Activated T-helper 2 cell treated with anti-CD3 and anti-CD28 coated beads, Interferon-gamma antibody, Interleukin-2, Interleukin-4, amounts not matched to agents 10 μg/mL and 5 μg/mL and 100 μg/mL, durations not matched to agents 14 hours and 24 hours and 36 hours (primary cell): ENCODE measurements at regions of chr2 and their contacts with region 1.

Region 1: GRCh38 chr2:202588647-202589581 is 45.9 kb upstream of the FAM117B start:
- DNase-seq: peak; percentile 53
- H3K4me3 Mint-ChIP-seq: no peak overlapping the region
- H3K27ac Mint-ChIP-seq: no peak overlapping the region
- H3K4me1 Mint-ChIP-seq: peaks cover 4% of the 10 kb centered on the region
- H3K27me3 Mint-ChIP-seq: no peaks in the 10 kb centered on the region

Region 2: DNA sequence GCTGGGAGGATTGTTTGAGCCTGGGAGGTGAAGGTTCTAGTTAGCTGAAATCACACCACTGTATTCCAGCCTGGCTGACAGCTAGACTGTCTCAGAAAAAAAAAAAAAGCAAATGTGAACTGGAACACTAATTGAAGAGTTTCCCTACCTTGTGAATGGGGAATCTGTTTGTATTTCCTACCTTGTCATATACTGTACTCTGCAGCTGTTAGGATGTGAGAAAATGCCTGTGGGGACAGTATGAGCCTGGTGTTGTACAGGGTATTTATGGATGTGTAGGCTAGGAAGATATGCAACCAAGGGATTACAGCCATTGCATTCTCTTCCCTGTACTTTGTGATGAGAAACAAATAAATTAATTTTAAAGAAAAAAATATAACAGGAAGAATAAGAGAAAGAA is 67.4 kb before region 1 on chr2:
- intact Hi-C with region 1: no loop called
- DNase-seq: no peak
- H3K4me3 Mint-ChIP-seq: no peak overlapping the region
- H3K27ac Mint-ChIP-seq: no peak overlapping the region
- H3K4me1 Mint-ChIP-seq: peaks cover 3% of the 10 kb centered on the region
- H3K27me3 Mint-ChIP-seq: no peaks in the 10 kb centered on the region

Region 3: DNA sequence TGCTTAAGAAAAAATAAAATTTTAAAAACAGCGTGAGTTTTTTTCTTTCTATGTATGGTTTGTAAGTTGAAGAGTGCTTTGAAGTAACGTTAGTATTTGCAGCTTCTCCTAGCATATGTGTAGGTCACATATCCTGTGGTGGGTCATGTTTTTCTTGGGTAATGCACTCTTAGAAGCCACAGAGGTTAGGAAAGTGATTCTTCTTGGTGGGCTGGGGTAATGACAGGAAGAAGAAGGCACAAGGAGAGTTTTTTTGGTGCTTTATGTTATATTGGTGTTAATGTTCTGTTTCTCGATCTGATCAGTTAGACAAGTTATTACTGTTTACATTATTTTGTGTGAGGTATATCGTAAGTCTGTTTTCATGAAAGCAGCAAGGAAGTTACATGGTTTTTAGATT is 173.6 kb after region 1 on chr2:
- intact Hi-C with region 1: loop called (anchors 5 kb)
- DNase-seq: no peak
- H3K4me3 Mint-ChIP-seq: peak overlapping the region; percentile 28
- H3K27ac Mint-ChIP-seq: peak overlapping the region; percentile 75
- H3K4me1 Mint-ChIP-seq: peaks cover 32% of the 10 kb centered on the region
- H3K27me3 Mint-ChIP-seq: no peaks in the 10 kb centered on the region

Region 4: DNA sequence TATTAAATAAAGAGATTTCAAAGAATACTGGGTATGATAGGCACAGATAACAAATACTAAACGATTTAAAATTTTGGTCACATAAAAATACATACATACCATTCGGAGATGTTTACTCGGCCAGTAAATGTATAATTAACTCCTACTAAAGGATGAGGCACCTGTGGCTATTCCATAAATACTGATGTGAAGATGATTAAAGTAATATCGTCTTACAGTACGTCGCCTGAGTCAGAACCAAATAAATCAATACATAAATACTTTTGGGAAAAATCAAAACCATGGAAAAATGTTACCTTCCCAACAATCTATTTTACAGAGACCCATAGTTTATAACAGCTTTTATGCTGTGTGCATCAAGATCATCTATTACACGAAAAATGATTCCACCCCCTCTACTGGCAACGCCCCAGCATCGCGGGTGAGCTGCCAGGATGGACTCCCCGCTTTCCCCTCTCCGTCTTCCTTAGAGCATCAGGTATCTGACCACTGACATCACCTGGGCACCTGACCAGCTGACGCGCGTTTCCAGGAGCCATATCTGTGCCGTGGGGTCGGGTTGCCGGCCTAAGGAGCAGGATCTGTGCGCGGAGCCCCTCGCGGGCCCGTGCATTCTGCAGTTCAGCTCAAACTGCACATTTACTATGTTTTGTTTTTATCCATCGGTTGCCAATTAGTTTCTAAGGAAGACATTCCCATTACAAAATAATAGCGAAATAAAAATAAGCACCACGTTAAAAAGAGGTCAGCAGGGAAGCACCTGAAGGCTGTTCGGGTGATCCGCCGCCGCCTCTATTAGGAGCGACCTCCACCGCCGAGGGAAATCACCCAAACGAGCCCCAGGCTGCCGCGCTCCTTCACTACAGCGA is 281.8 kb after region 1 on chr2:
- intact Hi-C with region 1: loop called (anchors 1 kb)
- DNase-seq: peak; percentile 58
- H3K4me3 Mint-ChIP-seq: peak overlapping the region; percentile 84
- H3K27ac Mint-ChIP-seq: peak overlapping the region; percentile 74
- H3K4me1 Mint-ChIP-seq: peaks cover 11% of the 10 kb centered on the region
- H3K27me3 Mint-ChIP-seq: no peaks in the 10 kb centered on the region

Region 5: GRCh38 chr2:203446071-203446481 is 857.2 kb after region 1 on chr2:
- intact Hi-C with region 1: loop called (anchors 10 kb)
- DNase-seq: no peak
- H3K4me3 Mint-ChIP-seq: no peak overlapping the region
- H3K27ac Mint-ChIP-seq: peak overlapping the region; percentile 66
- H3K4me1 Mint-ChIP-seq: peaks cover 21% of the 10 kb centered on the region
- H3K27me3 Mint-ChIP-seq: no peaks in the 10 kb centered on the region